Activated CD4-positive, alpha-beta T cell treated with anti-CD3 and anti-CD28 coated beads for 36 hours (primary cell): ENCODE measurements at regions of chr17 and their contacts with region 1.

Region 1: GRCh38 chr17:50269477-50270434 is 4.5 kb upstream of the TMEM92 start:
- DNase-seq: peak; percentile 86
- ATAC-seq: peak; percentile 97
- H3K4me3 Mint-ChIP-seq: no peak overlapping the region
- H3K27ac Mint-ChIP-seq: no peak overlapping the region
- H3K4me1 Mint-ChIP-seq: peaks cover 5% of the 10 kb centered on the region
- H3K27me3 Mint-ChIP-seq: peaks cover 16% of the 10 kb centered on the region

Region 2: DNA sequence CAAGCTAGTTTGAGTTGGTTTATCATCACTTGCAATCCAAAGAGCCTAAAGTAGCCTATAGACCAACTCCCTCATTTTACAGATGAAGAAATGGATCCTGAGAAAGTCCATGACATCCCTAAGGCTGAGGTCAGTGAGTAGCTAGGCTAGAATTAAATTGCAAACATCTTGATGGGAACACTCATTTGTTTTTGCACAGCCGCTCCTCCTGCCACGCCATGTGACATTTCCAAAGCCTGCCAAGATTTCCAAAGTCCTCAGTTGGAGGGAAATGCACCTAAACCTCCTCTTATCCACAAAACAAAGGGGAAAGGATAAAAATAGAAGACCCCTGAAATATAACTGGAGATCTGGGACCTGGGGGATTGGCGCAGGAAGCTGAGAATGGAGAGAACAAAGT is 19.5 kb after region 1 on chr17:
- CTCF ChIA-PET with region 1: interaction called, 10 read pairs
- POLR2A ChIA-PET with region 1: no interaction called
- intact Hi-C with region 1: no loop called
- DNase-seq: no peak
- ATAC-seq: no peak
- H3K4me3 Mint-ChIP-seq: no peak overlapping the region
- H3K27ac Mint-ChIP-seq: peak overlapping the region; percentile 26
- H3K4me1 Mint-ChIP-seq: peaks cover 16% of the 10 kb centered on the region
- H3K27me3 Mint-ChIP-seq: peaks cover 5% of the 10 kb centered on the region

Region 3: DNA sequence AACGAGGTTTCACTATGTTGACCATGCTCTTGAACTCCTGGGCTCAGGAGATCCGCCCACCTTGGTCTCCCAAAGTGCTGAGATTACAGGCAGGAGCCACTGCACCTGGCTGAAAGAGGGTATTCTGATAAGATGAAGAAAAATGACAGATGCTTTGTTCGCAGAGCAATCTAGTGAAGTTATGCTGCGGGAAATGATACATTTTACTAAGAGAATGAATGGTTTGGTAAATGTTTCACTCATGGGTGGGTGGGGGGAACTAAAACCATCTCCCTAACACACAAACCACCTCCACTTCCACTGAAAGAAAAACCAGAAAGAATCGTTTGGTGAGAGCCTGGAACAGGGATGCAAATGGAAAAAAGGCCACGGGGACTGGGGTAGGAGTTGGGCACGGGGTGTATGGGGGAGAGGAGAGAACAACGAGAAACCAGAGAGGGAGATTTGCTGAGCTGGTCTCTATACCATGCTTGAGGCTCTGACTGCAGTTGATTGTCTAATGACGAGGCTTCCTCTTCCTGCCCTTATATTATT is 57.1 kb after region 1 on chr17:
- CTCF ChIA-PET with region 1: no interaction called
- POLR2A ChIA-PET with region 1: no interaction called
- intact Hi-C with region 1: no loop called
- DNase-seq: no peak
- ATAC-seq: peak; percentile 52
- H3K4me3 Mint-ChIP-seq: no peak overlapping the region
- H3K27ac Mint-ChIP-seq: peak overlapping the region; percentile 27
- H3K4me1 Mint-ChIP-seq: peaks cover 5% of the 10 kb centered on the region
- H3K27me3 Mint-ChIP-seq: peaks cover 3% of the 10 kb centered on the region

Region 4: DNA sequence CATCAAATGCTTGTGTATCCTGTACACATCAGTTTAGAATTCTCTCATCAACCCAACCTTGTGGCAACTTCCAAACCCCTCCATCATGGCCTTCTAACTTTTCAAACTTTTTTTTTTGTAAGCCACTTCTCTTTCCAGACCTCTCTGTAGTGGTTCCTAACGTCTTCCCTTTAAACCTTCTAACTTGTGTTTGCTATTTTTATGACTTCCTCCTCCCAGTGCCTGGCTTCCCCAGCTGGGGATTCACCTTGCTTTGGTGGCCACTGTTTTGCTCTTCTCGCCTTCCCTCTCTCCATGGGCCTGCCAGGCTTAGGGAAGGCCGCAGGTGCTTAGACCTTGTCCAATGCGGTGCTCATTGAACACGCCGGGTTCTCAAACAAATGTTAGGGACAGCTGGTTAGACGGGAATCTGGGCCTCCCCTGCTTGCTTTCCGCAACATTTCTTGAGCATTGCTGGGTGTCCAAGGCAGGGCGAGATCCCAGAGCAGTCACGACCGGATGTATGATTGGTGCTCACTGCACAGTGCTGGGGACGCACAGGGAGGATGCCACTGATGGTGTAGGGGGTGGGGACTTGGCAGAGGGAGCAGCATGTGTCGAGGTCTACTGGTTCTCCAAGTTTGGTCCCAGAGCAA is 75.1 kb after region 1 on chr17:
- CTCF ChIA-PET with region 1: no interaction called
- POLR2A ChIA-PET with region 1: no interaction called
- intact Hi-C with region 1: no loop called
- DNase-seq: no peak
- ATAC-seq: no peak
- H3K4me3 Mint-ChIP-seq: peak overlapping the region; percentile 90
- H3K27ac Mint-ChIP-seq: peak overlapping the region; percentile 85
- H3K4me1 Mint-ChIP-seq: peaks cover 30% of the 10 kb centered on the region
- H3K27me3 Mint-ChIP-seq: no peaks in the 10 kb centered on the region